Breast epithelium (tissue), 4 donors: ENCODE measurements at regions of chr7 and their contacts with region 1.

Region 1: GRCh38 chr7:130479716-130480400 is 12.0 kb upstream of the MEST start:
- DNase-seq: no peak
- H3K4me3 ChIP-seq: no peak overlapping the region
- H3K27ac ChIP-seq: no peak overlapping the region
- H3K4me1 ChIP-seq: no peaks in the 10 kb centered on the region
- H3K27me3 ChIP-seq: no peaks in the 10 kb centered on the region
- CTCF ChIP-seq: no peak
- POLR2A ChIP-seq: no peak

Region 2: DNA sequence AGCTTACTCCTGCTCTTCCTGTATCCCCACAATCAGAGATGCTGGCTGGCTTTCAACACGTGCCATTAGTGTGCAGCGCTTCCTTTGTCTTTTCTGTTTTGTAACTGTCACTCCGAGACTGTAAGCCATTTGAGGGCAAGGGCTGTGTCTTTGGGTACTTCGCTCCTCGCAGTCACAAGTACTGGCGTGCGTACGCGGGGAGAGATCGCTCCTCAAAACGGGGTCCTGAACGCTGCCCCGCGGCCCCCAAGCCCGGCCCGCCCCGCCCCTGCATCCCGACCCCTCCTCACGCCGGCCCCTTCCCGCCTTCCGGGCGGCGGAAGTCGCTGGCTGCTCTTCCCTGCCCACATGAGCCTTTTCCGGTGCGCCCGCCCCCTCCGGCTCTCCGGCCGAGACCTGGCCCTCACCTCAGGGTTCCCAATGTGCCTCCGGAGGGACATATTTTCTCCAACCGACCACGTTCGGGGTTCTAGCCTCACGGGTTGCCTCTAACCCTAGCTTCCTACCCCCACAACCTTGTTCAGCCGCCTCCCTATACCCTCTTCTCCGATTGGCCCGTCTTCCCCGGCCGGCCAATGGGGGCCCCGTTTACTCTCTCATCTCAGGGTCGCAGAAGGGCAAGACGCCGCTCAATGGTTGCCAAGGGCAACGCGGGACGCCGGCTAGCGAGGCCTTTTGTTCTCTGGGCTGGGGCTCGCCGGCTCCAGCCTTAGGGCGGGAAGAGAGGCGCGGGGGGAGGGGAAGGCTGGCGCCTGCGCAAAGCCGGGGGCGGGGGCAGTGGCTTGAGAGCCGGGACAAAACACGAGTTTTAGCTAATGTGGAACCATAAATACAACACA is 39.1 kb before region 1 on chr7 and contains the start of gene CEP41:
- intact Hi-C with region 1: loop called (anchors 2 kb)
- DNase-seq: peak; percentile 94 to 95
- H3K4me3 ChIP-seq: peak within 1 kb of the TSS; percentile 69 to 83 (median 78)
- H3K27ac ChIP-seq: peak within 1 kb of the TSS; percentile 91 to 96
- H3K4me1 ChIP-seq: peaks cover 0 to 12% of the 10 kb centered on the region in 2 donors
- H3K27me3 ChIP-seq: no peaks in the 10 kb centered on the region
- CTCF ChIP-seq: no peak
- POLR2A ChIP-seq: no peak
- total RNA-seq, gene CEP41: 5.9 to 8.9 (median 7.0) TPM